T-cell (primary cell): ENCODE measurements at regions of chr5 and their contacts with region 1.

Region 1: DNA sequence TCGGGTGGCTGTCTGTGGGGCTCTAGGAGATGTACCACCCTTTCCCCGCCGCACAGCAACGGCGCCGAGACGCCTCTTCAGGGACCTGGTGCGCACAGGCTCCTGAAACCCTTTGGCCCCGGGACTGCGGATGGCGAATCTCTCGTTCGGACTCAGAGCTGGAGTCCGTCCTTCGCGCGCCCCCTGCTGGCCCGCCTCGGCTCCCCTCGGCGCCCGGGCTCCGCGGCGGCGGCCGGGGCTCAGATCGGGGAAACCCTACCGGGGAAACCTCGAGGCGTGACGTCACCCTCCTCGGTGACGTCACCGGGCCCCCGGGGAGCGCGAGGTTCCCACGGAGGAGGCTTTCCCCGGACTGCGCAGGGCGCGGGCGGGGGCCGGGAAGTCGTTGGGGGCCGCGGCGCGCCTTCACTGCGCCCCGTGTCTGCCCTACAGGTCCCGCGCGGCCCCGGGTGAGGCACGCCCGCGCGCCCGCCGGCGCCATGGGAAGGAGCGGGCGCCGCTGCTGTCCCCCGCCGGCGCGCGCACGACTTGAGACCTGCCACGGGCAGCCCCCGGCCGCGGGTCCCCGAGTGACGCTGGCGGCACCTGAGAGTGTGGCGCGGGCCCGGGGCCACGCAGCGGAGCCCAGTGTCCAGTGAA is 7.9 kb downstream of the PRR7 start:
- DNase-seq: peak; percentile 84 to 97 (median 92)
- ATAC-seq: peak; percentile 51 to 64 (median 56)
- H3K4me3 ChIP-seq: peak overlapping the region; percentile 49 to 68
- H3K4me3 Mint-ChIP-seq: peak overlapping the region; percentile 81 to 85 (median 82)
- H3K27ac ChIP-seq: peak overlapping the region; percentile 97
- H3K27ac Mint-ChIP-seq: peak overlapping the region in 1 of 2 donors; percentile 58
- H3K4me1 ChIP-seq: peaks cover 0 to 49% of the 10 kb centered on the region in 2 experiments
- H3K4me1 Mint-ChIP-seq: peaks cover 23 to 32% (median 28%) of the 10 kb centered on the region in 3 donors
- H3K27me3 ChIP-seq: peaks cover 0 to 4% of the 10 kb centered on the region in 2 experiments
- H3K27me3 Mint-ChIP-seq: no peaks in the 10 kb centered on the region

Region 2: GRCh38 chr5:176664886-176665285 is 789.6 kb before region 1 on chr5:
- CTCF ChIA-PET with region 1: no interaction called
- POLR2A ChIA-PET with region 1: no interaction called
- DNase-seq: no peak
- ATAC-seq: no peak
- H3K4me3 ChIP-seq: no peak overlapping the region
- H3K4me3 Mint-ChIP-seq: no peak overlapping the region
- H3K27ac ChIP-seq: no peak overlapping the region
- H3K27ac Mint-ChIP-seq: no peak overlapping the region
- H3K4me1 ChIP-seq: peaks cover 0 to 14% of the 10 kb centered on the region in 2 experiments
- H3K4me1 Mint-ChIP-seq: peaks cover 9 to 12% (median 10%) of the 10 kb centered on the region in 3 donors
- H3K27me3 ChIP-seq: peaks cover 4 to 54% of the 10 kb centered on the region in 2 experiments
- H3K27me3 Mint-ChIP-seq: peaks cover 15 to 20% of the 10 kb centered on the region in 2 donors

Region 3: DNA sequence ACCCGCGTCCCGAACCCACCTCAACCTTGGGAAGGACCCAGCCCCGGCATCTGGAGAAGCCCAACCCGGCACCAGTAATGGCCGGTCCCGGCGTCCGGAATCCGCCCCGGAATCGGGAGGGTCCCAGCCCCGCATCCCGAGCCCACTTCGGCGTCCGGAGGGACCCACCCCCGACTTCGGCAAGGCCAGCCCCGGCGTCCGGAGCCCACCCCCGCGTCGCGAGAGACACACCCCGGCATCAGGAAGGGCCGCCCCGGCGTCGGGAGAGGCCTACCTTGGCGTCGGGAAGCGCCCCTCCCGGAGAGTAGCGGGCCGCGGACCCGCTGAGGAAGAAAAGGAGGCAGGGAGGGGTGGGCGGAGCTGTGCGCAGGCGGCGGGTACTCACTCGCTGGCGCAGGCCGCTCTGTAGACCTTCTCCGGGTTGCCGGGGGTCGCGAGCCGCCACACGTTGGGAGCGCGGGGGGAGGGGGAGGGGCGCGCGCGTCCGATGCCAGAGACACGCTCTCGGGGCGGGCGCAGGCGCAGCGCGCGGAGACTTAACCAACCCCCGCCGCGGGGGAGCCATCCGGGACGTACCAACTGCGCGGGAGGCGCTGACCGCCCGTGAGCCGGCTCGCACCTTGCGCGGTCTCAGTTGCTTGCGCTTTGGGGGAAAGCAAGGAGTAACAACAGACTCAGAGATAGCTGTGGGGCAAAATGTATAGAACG is 448.1 kb before region 1 on chr5 and contains the start of gene UIMC1:
- CTCF ChIA-PET with region 1: interaction called in 1 of 2 experiments, 10 read pairs
- POLR2A ChIA-PET with region 1: no interaction called
- DNase-seq: peak; percentile 73 to 94 (median 87)
- ATAC-seq: peak; percentile 79 to 87 (median 84)
- H3K4me3 ChIP-seq: peak within 1 kb of the TSS; percentile 87 to 95
- H3K4me3 Mint-ChIP-seq: peak within 1 kb of the TSS; percentile 93 to 96 (median 94)
- H3K27ac ChIP-seq: peak within 1 kb of the TSS; percentile 71
- H3K27ac Mint-ChIP-seq: peak within 1 kb of the TSS; percentile 92 to 97
- H3K4me1 ChIP-seq: peaks cover 14 to 22% of the 10 kb centered on the region in 2 experiments
- H3K4me1 Mint-ChIP-seq: peaks cover 27 to 35% (median 32%) of the 10 kb centered on the region in 3 donors
- H3K27me3 ChIP-seq: no peaks in the 10 kb centered on the region
- H3K27me3 Mint-ChIP-seq: no peaks in the 10 kb centered on the region
- total RNA-seq, gene UIMC1: 50.0 to 70.3 (median 56.7) TPM

Region 4: GRCh38 chr5:177431317-177432142 is 23.0 kb before region 1 on chr5:
- CTCF ChIA-PET with region 1: interaction called in 1 of 2 experiments, 20 read pairs
- POLR2A ChIA-PET with region 1: interaction called in 1 of 2 experiments, 4 read pairs
- DNase-seq: peak in 34 of 35 experiments; percentile 54 to 85 (median 67)
- ATAC-seq: peak; percentile 29 to 49 (median 47)
- H3K4me3 ChIP-seq: peak overlapping the region; percentile 41 to 53
- H3K4me3 Mint-ChIP-seq: peak overlapping the region; percentile 79 to 92 (median 86)
- H3K27ac ChIP-seq: peak overlapping the region; percentile 84
- H3K27ac Mint-ChIP-seq: peak overlapping the region; percentile 95
- H3K4me1 ChIP-seq: peaks cover 64 to 95% of the 10 kb centered on the region in 2 experiments
- H3K4me1 Mint-ChIP-seq: peaks cover 61 to 84% (median 84%) of the 10 kb centered on the region in 3 donors
- H3K27me3 ChIP-seq: no peaks in the 10 kb centered on the region
- H3K27me3 Mint-ChIP-seq: no peaks in the 10 kb centered on the region

Region 5: DNA sequence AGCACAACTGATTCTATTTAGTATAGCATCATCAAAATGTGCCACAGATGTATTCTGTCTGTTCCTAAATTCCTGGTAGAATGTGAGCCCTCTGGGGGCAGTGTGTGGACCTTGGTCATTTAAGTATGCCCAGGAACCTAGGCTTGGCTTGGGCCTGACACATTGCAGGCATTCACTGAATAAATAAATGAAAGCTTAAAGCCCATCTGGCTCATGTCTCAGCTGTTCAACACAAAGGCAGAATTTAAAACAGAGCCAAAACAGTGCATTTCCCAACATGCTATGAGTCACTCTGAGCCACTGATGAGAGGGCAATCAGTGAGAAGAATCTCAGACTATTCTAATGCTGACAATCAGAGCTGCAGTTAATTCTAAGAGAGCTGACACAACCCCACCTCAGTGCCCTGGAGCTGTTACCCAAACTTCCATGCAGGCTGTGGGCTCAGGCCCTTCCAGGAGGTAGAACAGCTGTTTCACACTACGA is 91.8 kb after region 1 on chr5:
- CTCF ChIA-PET with region 1: no interaction called
- POLR2A ChIA-PET with region 1: no interaction called
- DNase-seq: no peak
- ATAC-seq: no peak
- H3K4me3 ChIP-seq: no peak overlapping the region
- H3K4me3 Mint-ChIP-seq: no peak overlapping the region
- H3K27ac ChIP-seq: no peak overlapping the region
- H3K27ac Mint-ChIP-seq: no peak overlapping the region
- H3K4me1 ChIP-seq: no peaks in the 10 kb centered on the region
- H3K4me1 Mint-ChIP-seq: peaks cover 43 to 50% (median 46%) of the 10 kb centered on the region in 3 donors
- H3K27me3 ChIP-seq: no peaks in the 10 kb centered on the region
- H3K27me3 Mint-ChIP-seq: no peaks in the 10 kb centered on the region

Region 6: DNA sequence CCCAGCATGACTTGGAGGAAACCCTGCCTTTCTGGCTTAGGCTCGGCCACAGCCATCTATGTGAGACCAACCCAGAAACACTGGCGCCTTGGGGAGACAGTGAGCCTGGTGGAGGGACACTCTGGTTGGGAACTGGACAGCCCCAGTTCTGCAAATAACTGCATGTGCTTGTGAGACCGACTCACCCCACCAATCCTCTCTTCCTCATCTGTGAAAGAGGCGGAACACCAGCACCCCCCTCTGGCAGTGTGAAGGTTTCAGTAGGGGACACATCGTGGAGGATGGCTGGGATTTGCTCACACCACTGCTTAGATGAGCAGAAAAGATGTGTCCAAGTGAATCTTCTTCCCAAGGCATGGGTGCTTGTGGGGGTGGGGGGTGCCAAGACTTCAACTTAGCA is 615.4 kb after region 1 on chr5:
- CTCF ChIA-PET with region 1: no interaction called
- POLR2A ChIA-PET with region 1: no interaction called
- DNase-seq: peak in 21 of 35 experiments; percentile 11 to 55 (median 28)
- ATAC-seq: peak in 3 of 4 experiments; percentile 40 to 74 (median 47)
- H3K4me3 ChIP-seq: no peak overlapping the region
- H3K4me3 Mint-ChIP-seq: no peak overlapping the region
- H3K27ac ChIP-seq: no peak overlapping the region
- H3K27ac Mint-ChIP-seq: no peak overlapping the region
- H3K4me1 ChIP-seq: peaks cover 2 to 8% of the 10 kb centered on the region in 2 experiments
- H3K4me1 Mint-ChIP-seq: peaks cover 7 to 18% (median 10%) of the 10 kb centered on the region in 3 donors
- H3K27me3 ChIP-seq: peaks cover 0 to 19% of the 10 kb centered on the region in 2 experiments
- H3K27me3 Mint-ChIP-seq: peaks cover 0 to 11% of the 10 kb centered on the region in 2 donors